K562 (cell line): ENCODE measurements at regions of chr1 and their contacts with region 1.

Region 1: DNA sequence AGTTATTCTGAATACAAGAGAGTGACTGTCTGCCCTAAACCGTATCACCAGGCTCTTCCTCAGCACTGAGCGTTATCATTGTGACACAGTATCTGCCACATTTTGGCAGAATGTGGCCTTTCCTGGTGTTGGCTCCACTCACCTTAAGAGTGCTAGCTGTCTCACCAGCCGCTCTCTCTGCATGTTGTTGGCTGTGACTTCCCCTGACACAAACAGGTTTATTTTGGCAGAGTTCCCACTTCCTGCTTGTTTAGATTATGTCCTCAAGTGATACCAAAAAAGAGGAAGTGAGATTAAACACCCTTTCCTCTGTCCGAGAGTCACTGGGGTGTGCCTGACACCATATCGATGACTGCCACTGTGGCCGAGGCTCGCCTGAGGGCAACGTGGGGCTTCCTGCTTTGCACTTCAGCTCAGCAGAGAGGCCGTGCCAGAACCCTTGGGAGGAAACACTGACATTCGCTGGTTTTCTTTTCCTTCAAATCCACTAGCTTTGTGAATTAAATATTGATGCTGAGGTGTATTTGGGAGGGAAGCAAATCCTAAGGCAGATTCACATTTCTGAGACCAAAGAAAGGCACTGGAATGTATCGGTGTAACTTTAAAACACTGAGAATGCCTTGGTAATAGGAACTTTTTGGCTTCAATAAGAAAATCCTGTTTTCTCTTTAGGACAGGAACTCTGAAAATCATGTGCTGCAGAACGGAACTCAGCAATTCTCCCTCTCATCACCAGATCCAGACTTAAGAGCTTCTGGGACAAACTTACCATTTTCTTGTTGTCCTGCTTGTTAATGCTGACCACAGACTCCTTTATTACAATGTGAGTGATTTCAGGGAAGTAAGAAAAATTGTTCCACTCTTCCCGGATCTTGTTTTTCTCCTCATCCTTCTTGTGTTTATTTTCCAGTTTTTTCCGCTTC is 102.1 kb downstream of the JAK1 start:
- DNase-seq: peak; percentile 61 to 98 (median 74)
- ATAC-seq: peak; percentile 98
- H3K4me3 ChIP-seq: no peak overlapping the region
- H3K27ac ChIP-seq: peak overlapping the region; percentile 87
- H3K4me1 ChIP-seq: peaks cover 7 to 22% of the 10 kb centered on the region in 2 experiments
- H3K27me3 ChIP-seq: no peaks in the 10 kb centered on the region
- CTCF ChIP-seq: peak in 1 of 3 experiments; percentile 6; a peak in 1 of 6 replicates
- EP300 ChIP-seq: peak; percentile 96
- POLR2A ChIP-seq: no peak; the same call in 1 of the 2 replicates
- RAD21 ChIP-seq: peak in 1 of 2 experiments; percentile 60; a peak in 3 of 4 replicates

Region 2: GRCh38 chr1:64892576-64893573 is 28.6 kb after region 1 on chr1:
- CTCF ChIA-PET with region 1: no interaction called
- POLR2A ChIA-PET with region 1: interaction called, 3 read pairs
- in situ Hi-C with region 1: no loop called
- intact Hi-C with region 1: loop called (anchors 1 kb)
- DNase-seq: no peak
- ATAC-seq: peak; percentile 9
- H3K4me3 ChIP-seq: no peak overlapping the region
- H3K27ac ChIP-seq: no peak overlapping the region
- H3K4me1 ChIP-seq: peaks cover 13 to 42% of the 10 kb centered on the region in 2 experiments; a peak in 4 of 5 replicates
- H3K27me3 ChIP-seq: no peaks in the 10 kb centered on the region
- CTCF ChIP-seq: no peak
- EP300 ChIP-seq: no peak
- POLR2A ChIP-seq: no peak
- RAD21 ChIP-seq: no peak

Region 3: DNA sequence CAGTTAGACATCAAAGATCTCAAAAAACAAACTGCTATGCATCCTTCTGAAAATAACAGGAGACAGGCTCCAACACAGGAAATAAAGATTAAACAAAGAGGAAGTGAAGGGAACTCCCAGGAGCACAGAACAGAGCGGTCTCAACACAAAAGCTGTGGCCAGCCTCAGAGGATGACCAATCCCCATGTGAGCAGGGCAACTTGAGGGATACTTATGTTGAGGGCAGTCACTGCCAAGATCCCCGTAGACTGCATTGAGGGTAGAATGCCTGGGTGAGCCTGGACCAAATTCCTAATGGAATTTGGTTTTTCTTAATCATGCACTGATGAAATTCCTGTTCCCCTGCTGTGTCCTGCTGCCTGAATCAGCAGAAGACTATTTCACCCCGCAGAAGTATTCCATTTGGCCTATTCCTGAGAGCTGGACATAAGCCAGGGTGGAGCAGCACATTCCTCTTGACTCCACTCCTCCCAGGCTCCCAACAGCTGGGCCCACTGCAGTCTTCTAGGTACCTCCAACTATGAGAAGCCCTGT is 53.1 kb after region 1 on chr1:
- CTCF ChIA-PET with region 1: no interaction called
- POLR2A ChIA-PET with region 1: no interaction called
- in situ Hi-C with region 1: no loop called
- intact Hi-C with region 1: loop called (anchors 1 kb)
- DNase-seq: peak in 2 of 4 experiments; percentile 39 to 44
- ATAC-seq: peak; percentile 69
- H3K4me3 ChIP-seq: no peak overlapping the region
- H3K27ac ChIP-seq: peak overlapping the region; percentile 10; the same call in 1 of the 3 replicates
- H3K4me1 ChIP-seq: peaks cover 13 to 50% of the 10 kb centered on the region in 2 experiments; a peak in 4 of 5 replicates
- H3K27me3 ChIP-seq: no peaks in the 10 kb centered on the region
- CTCF ChIP-seq: no peak
- EP300 ChIP-seq: no peak
- POLR2A ChIP-seq: no peak
- RAD21 ChIP-seq: no peak

Region 4: GRCh38 chr1:65020774-65021173 is 156.5 kb after region 1 on chr1:
- CTCF ChIA-PET with region 1: no interaction called
- POLR2A ChIA-PET with region 1: no interaction called
- in situ Hi-C with region 1: no loop called
- intact Hi-C with region 1: loop called (anchors 5 kb)
- DNase-seq: peak in 2 of 4 experiments; percentile 33 to 51
- ATAC-seq: peak; percentile 95
- H3K4me3 ChIP-seq: no peak overlapping the region
- H3K27ac ChIP-seq: no peak overlapping the region; the same call in 2 of the 3 replicates
- H3K4me1 ChIP-seq: peaks cover 0 to 19% of the 10 kb centered on the region in 2 experiments; a peak in 2 of 5 replicates
- H3K27me3 ChIP-seq: no peaks in the 10 kb centered on the region
- CTCF ChIP-seq: peak; percentile 56 to 63 (median 58)
- EP300 ChIP-seq: no peak
- POLR2A ChIP-seq: no peak
- RAD21 ChIP-seq: peak; percentile 38 to 68

Region 5: GRCh38 chr1:65357291-65357960 is 493.1 kb after region 1 on chr1:
- CTCF ChIA-PET with region 1: no interaction called
- POLR2A ChIA-PET with region 1: no interaction called
- in situ Hi-C with region 1: no loop called
- intact Hi-C with region 1: no loop called
- DNase-seq: no peak
- ATAC-seq: no peak
- H3K4me3 ChIP-seq: no peak overlapping the region
- H3K27ac ChIP-seq: no peak overlapping the region
- H3K4me1 ChIP-seq: no peaks in the 10 kb centered on the region
- H3K27me3 ChIP-seq: no peaks in the 10 kb centered on the region
- CTCF ChIP-seq: no peak
- EP300 ChIP-seq: no peak
- POLR2A ChIP-seq: no peak
- RAD21 ChIP-seq: no peak